GM12878 (cell line): ENCODE measurements at regions of chr11 and their contacts with region 1.

Region 1: GRCh38 chr11:62427630-62428233 is 8.9 kb downstream of the SCGB1A1 start:
- DNase-seq: peak; percentile 41
- ATAC-seq: peak; percentile 76
- H3K4me3 ChIP-seq: no peak overlapping the region
- H3K27ac ChIP-seq: no peak overlapping the region
- H3K4me1 ChIP-seq: peaks cover 7% of the 10 kb centered on the region
- H3K27me3 ChIP-seq: no peaks in the 10 kb centered on the region; a peak in 1 of 4 replicates
- CTCF ChIP-seq: no peak
- EP300 ChIP-seq: peak; percentile 22 to 26; a peak in 2 of 4 replicates
- POLR2A ChIP-seq: no peak
- RAD21 ChIP-seq: no peak

Region 2: DNA sequence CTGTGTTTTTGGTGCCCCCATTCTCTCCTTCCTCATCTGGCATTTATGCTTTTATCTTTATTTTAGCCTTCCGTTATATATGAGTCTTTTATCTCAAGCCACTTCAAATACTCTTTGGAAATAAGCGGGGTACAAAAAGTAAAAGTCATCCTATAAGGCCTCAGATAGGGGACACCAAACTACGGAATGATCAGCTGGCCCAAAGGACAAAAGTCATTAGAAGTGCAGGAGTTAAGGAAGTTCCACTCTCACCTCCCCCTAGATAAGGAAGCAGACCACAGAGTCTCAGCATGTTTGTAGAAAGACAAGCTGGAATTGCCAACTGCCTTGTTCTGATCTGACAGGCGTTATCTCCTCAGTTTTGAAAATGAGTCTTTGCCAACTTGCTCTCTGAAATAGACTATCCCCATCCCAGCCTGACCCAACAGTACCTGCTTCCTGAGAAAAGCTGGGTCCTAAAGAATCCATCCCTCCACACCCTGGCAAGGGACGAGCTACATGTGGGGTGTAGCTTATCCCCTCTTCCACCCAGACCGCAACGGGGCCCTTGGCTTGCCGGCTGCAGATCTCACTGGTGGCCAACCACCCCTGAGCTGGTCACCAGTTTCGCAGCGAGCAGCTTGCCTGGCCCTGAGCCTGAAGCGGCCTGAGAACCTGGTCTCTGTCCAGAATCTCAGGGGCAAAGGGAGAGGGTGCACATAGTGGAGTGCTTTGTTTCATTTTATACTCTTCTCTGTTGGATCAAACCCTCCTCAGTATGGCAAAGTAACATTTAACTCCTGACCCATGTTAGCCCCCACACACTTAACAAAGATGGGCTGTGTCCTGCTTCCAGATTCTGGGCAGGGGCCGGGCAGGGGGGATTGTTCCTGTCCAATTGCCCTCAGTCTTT is 585.9 kb before region 1 on chr11:
- CTCF ChIA-PET with region 1: no interaction called
- POLR2A ChIA-PET with region 1: no interaction called
- RAD21 ChIA-PET with region 1: no interaction called
- SMC1A ChIA-PET with region 1: no interaction called
- in situ Hi-C with region 1: no loop called
- intact Hi-C with region 1: no loop called
- DNase-seq: no peak
- ATAC-seq: no peak
- H3K4me3 ChIP-seq: no peak overlapping the region
- H3K27ac ChIP-seq: no peak overlapping the region
- H3K4me1 ChIP-seq: no peaks in the 10 kb centered on the region
- H3K27me3 ChIP-seq: no peaks in the 10 kb centered on the region
- CTCF ChIP-seq: no peak
- EP300 ChIP-seq: no peak
- POLR2A ChIP-seq: no peak
- RAD21 ChIP-seq: no peak

Region 3: GRCh38 chr11:62394825-62395538 is 32.8 kb before region 1 on chr11:
- CTCF ChIA-PET with region 1: interaction called, 25 read pairs
- POLR2A ChIA-PET with region 1: interaction called, 4 read pairs
- RAD21 ChIA-PET with region 1: interaction called, 10 read pairs
- SMC1A ChIA-PET with region 1: interaction called, 8 read pairs
- in situ Hi-C with region 1: no loop called
- intact Hi-C with region 1: no loop called
- DNase-seq: peak; percentile 28
- ATAC-seq: peak; percentile 97
- H3K4me3 ChIP-seq: no peak overlapping the region
- H3K27ac ChIP-seq: no peak overlapping the region
- H3K4me1 ChIP-seq: no peaks in the 10 kb centered on the region
- H3K27me3 ChIP-seq: no peaks in the 10 kb centered on the region
- CTCF ChIP-seq: peak; percentile 51 to 82 (median 68); a peak in 5 of 6 replicates
- EP300 ChIP-seq: no peak
- POLR2A ChIP-seq: no peak
- RAD21 ChIP-seq: peak; percentile 86

Region 4: DNA sequence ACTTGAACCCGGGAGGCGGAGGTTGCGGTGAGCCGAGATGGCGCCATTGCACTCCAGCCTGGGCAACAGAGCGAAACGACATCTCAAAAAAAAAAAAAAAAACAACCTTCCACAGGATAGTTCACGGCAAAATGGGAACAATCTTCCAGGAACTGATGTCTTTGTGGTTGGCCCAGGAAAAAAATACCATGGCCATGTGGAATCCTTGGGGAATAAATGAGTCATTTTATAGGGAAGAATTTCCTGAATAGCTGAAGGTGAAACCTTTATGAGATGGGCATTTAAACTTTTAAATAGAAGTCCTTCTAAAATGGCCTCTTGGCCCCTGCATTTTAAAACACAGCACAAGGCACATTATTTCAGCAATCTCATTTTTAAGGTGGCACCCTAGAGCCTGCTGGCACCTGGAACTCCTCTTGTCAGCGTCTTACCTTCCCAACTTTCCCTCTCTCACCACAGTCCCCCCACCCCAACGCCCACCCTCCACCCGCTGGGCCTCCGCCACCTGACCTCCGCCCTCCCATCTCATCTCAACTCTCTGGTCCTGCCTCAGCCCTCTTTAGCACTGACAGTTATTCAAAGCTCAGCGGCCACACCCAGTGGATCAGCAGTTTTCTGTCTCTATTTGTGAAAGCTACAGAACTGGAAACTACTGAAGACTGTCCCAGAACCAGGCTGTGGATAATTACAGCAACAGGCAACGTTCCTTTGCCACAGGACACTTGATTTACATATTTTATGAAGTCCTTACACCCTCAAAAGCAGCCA is 34.2 kb after region 1 on chr11:
- CTCF ChIA-PET with region 1: interaction called, 14 read pairs
- POLR2A ChIA-PET with region 1: interaction called, 5 read pairs
- RAD21 ChIA-PET with region 1: interaction called, 5 read pairs
- SMC1A ChIA-PET with region 1: interaction called, 9 read pairs
- in situ Hi-C with region 1: no loop called
- intact Hi-C with region 1: no loop called
- DNase-seq: no peak
- ATAC-seq: no peak
- H3K4me3 ChIP-seq: no peak overlapping the region
- H3K27ac ChIP-seq: no peak overlapping the region
- H3K4me1 ChIP-seq: peaks cover 9% of the 10 kb centered on the region; the same call in 1 of the 2 replicates
- H3K27me3 ChIP-seq: no peaks in the 10 kb centered on the region
- CTCF ChIP-seq: no peak
- EP300 ChIP-seq: no peak
- POLR2A ChIP-seq: no peak
- RAD21 ChIP-seq: no peak

Region 5: GRCh38 chr11:62542750-62543567 is 115.2 kb after region 1 on chr11:
- CTCF ChIA-PET with region 1: interaction called, 280 read pairs
- POLR2A ChIA-PET with region 1: interaction called, 20 read pairs
- RAD21 ChIA-PET with region 1: interaction called, 146 read pairs
- SMC1A ChIA-PET with region 1: interaction called, 116 read pairs
- in situ Hi-C with region 1: no loop called
- intact Hi-C with region 1: loop called (anchors 1 kb)
- DNase-seq: peak; percentile 51
- ATAC-seq: peak; percentile 48
- H3K4me3 ChIP-seq: peak overlapping the region; percentile 84
- H3K27ac ChIP-seq: peak overlapping the region; percentile 95
- H3K4me1 ChIP-seq: peaks cover 77% of the 10 kb centered on the region
- H3K27me3 ChIP-seq: no peaks in the 10 kb centered on the region; a peak in 2 of 4 replicates
- CTCF ChIP-seq: peak; percentile 97 to 99 (median 97)
- EP300 ChIP-seq: no peak
- POLR2A ChIP-seq: no peak
- RAD21 ChIP-seq: peak; percentile 81

Region 6: GRCh38 chr11:62567018-62567633 is 139.4 kb after region 1 on chr11:
- CTCF ChIA-PET with region 1: interaction called, 18 read pairs
- POLR2A ChIA-PET with region 1: no interaction called
- RAD21 ChIA-PET with region 1: interaction called, 9 read pairs
- SMC1A ChIA-PET with region 1: interaction called, 94 read pairs
- in situ Hi-C with region 1: no loop called
- intact Hi-C with region 1: no loop called
- DNase-seq: no peak
- ATAC-seq: peak; percentile 79
- H3K4me3 ChIP-seq: no peak overlapping the region
- H3K27ac ChIP-seq: peak overlapping the region; percentile 8
- H3K4me1 ChIP-seq: peaks cover 22% of the 10 kb centered on the region
- H3K27me3 ChIP-seq: no peaks in the 10 kb centered on the region
- CTCF ChIP-seq: no peak
- EP300 ChIP-seq: no peak
- POLR2A ChIP-seq: no peak
- RAD21 ChIP-seq: no peak

Region 7: GRCh38 chr11:62601394-62602140 is 173.8 kb after region 1 on chr11 and contains the start of gene MTA2:
- CTCF ChIA-PET with region 1: no interaction called
- POLR2A ChIA-PET with region 1: interaction called, 3 read pairs
- RAD21 ChIA-PET with region 1: interaction called, 12 read pairs
- SMC1A ChIA-PET with region 1: interaction called, 3 read pairs
- in situ Hi-C with region 1: no loop called
- intact Hi-C with region 1: no loop called
- DNase-seq: peak; percentile 87
- ATAC-seq: peak; percentile 92
- H3K4me3 ChIP-seq: peak within 1 kb of the TSS; percentile 91
- H3K27ac ChIP-seq: peak within 1 kb of the TSS; percentile 97
- H3K4me1 ChIP-seq: peaks cover 19% of the 10 kb centered on the region
- H3K27me3 ChIP-seq: no peaks in the 10 kb centered on the region
- CTCF ChIP-seq: 0 out of 6 replicates have a peak, but pooled peaks of 1 of the 3 experiments have one; percentile 7
- EP300 ChIP-seq: no peak
- POLR2A ChIP-seq: peak; percentile 85
- RAD21 ChIP-seq: no peak
- polyA plus RNA-seq, gene MTA2: 6.7 to 6.8 TPM

Region 8: DNA sequence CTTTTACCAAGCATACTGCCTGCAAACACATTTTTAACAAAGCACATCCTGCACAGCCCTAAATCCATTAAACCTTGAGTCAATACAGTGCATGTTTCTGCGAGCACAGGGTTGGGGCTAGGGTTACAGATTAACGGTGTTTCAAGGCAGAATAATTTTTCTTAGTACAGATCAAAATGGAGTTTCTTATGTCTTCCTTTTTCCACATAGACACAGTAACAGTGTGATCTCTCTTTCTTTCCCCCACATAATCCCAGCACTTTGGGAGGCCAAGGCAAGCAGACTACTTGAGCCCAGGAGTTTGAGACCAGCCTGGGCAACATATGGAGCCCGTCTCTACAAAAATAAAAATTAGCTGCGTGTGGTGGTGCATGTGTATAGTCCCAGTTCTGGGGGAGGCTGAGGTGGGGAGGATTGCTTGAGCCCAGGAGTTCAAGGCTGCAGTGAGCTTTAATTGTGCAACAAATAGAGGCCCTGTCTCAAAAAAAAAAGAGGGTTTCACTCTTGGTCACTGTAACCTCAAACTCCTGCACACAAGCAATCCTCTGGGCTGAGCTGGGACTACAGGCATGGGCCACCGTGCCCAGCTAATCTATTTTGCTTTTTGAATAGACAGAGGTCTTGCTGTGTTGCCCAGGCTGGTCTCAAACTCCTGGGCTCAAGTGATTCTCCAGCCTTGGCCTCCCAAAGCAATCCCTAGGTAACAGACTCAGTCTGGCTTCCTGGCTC is 433.3 kb after region 1 on chr11:
- CTCF ChIA-PET with region 1: interaction called, 8 read pairs
- POLR2A ChIA-PET with region 1: no interaction called
- RAD21 ChIA-PET with region 1: interaction called, 7 read pairs
- SMC1A ChIA-PET with region 1: interaction called, 4 read pairs
- in situ Hi-C with region 1: loop called (anchors 10 kb)
- intact Hi-C with region 1: loop called (anchors 10 kb)
- DNase-seq: no peak
- ATAC-seq: peak; percentile 72
- H3K4me3 ChIP-seq: peak overlapping the region; percentile 28; the same call in 1 of the 2 replicates
- H3K27ac ChIP-seq: peak overlapping the region; percentile 61
- H3K4me1 ChIP-seq: peaks cover 23% of the 10 kb centered on the region
- H3K27me3 ChIP-seq: no peaks in the 10 kb centered on the region
- CTCF ChIP-seq: no peak
- EP300 ChIP-seq: no peak
- POLR2A ChIP-seq: no peak
- RAD21 ChIP-seq: no peak